ENCODE measurements at regions of chr19 and their contacts with region 1.

Region 1: GRCh38 chr19:10491472-10492047 is 11.6 kb downstream of the KEAP1 start:
- DNase-seq: no peak
- ATAC-seq: no peak
- H3K4me3 Mint-ChIP-seq: no peak overlapping the region
- H3K27ac Mint-ChIP-seq: no peak overlapping the region
- H3K4me1 Mint-ChIP-seq: peaks cover 10% of the 10 kb centered on the region
- H3K27me3 Mint-ChIP-seq: no peaks in the 10 kb centered on the region
- CTCF ChIP-seq: no peak

Region 2: DNA sequence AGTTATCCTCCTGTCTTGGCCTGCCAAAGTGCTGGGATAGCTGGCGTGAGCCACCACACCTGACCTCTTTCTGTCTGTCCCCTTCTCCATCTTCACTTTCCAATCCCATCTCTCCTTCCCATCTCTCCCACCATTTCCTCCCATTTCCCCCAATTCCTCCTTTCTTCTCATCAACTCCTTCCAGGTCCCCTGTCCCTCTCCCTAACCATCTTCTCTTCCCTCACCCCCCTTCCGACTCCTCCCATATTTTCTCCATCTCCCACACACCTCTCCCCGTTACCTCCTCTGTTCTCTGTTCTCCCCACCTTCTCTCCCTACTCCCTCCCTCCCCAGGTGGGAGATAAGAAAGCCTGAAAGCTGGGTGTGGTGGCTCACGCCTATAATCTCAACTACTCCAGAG is 29.0 kb before region 1 on chr19:
- CTCF ChIA-PET with region 1: no interaction called
- POLR2A ChIA-PET with region 1: no interaction called
- intact Hi-C with region 1: no loop called
- DNase-seq: no peak
- ATAC-seq: no peak
- H3K4me3 Mint-ChIP-seq: no peak overlapping the region
- H3K27ac Mint-ChIP-seq: no peak overlapping the region
- H3K4me1 Mint-ChIP-seq: peaks cover 12% of the 10 kb centered on the region
- H3K27me3 Mint-ChIP-seq: no peaks in the 10 kb centered on the region
- CTCF ChIP-seq: no peak

Region 3: GRCh38 chr19:10478903-10479384 is 12.6 kb before region 1 on chr19:
- CTCF ChIA-PET with region 1: interaction called, 11 read pairs
- POLR2A ChIA-PET with region 1: no interaction called
- intact Hi-C with region 1: no loop called
- DNase-seq: peak; percentile 95
- ATAC-seq: peak; percentile 97
- H3K4me3 Mint-ChIP-seq: peak overlapping the region; percentile 44
- H3K27ac Mint-ChIP-seq: no peak overlapping the region
- H3K4me1 Mint-ChIP-seq: peaks cover 9% of the 10 kb centered on the region
- H3K27me3 Mint-ChIP-seq: no peaks in the 10 kb centered on the region
- CTCF ChIP-seq: peak; percentile 92

Measured in activated CD8-positive, alpha-beta T cell treated with anti-CD3 and anti-CD28 coated beads for 36 hours (primary cell).